BJ (cell line): ENCODE measurements at regions of chr11 and their contacts with region 1.

Region 1: GRCh38 chr11:72144807-72145560 is 9.5 kb downstream of the FOLR3 start:
- DNase-seq: peak; percentile 88
- H3K4me3 ChIP-seq: no peak overlapping the region
- H3K27me3 ChIP-seq: no peaks in the 10 kb centered on the region
- CTCF ChIP-seq: no peak

Region 2: GRCh38 chr11:72040726-72041441 is 104.1 kb before region 1 on chr11:
- CTCF ChIA-PET with region 1: interaction called, 18 read pairs
- POLR2A ChIA-PET with region 1: no interaction called
- DNase-seq: peak; percentile 66
- H3K4me3 ChIP-seq: peak overlapping the region; percentile 75
- H3K27me3 ChIP-seq: no peaks in the 10 kb centered on the region
- CTCF ChIP-seq: no peak

Region 3: GRCh38 chr11:72112321-72113219 is 32.4 kb before region 1 on chr11 and contains the start of gene ANAPC15:
- CTCF ChIA-PET with region 1: interaction called, 17 read pairs
- POLR2A ChIA-PET with region 1: interaction called, 10 read pairs
- DNase-seq: peak; percentile 98
- H3K4me3 ChIP-seq: peak within 1 kb of the TSS; percentile 63
- H3K27me3 ChIP-seq: no peaks in the 10 kb centered on the region
- CTCF ChIP-seq: no peak
- polyA plus RNA-seq, gene ANAPC15: 51.5 and 54.3 TPM in 2 replicates

Region 4: GRCh38 chr11:72129381-72129780 is 15.6 kb before region 1 on chr11:
- CTCF ChIA-PET with region 1: interaction called, 11 read pairs
- POLR2A ChIA-PET with region 1: no interaction called
- DNase-seq: no peak
- H3K4me3 ChIP-seq: no peak overlapping the region
- H3K27me3 ChIP-seq: no peaks in the 10 kb centered on the region
- CTCF ChIP-seq: no peak

Region 5: GRCh38 chr11:72179804-72180396 is 34.9 kb after region 1 on chr11:
- CTCF ChIA-PET with region 1: interaction called, 16 read pairs
- POLR2A ChIA-PET with region 1: no interaction called
- DNase-seq: no peak
- H3K4me3 ChIP-seq: no peak overlapping the region
- H3K27me3 ChIP-seq: no peaks in the 10 kb centered on the region
- CTCF ChIP-seq: no peak